Caco-2 (cell line): ENCODE measurements at regions of chr7 and their contacts with region 1.

Region 1: DNA sequence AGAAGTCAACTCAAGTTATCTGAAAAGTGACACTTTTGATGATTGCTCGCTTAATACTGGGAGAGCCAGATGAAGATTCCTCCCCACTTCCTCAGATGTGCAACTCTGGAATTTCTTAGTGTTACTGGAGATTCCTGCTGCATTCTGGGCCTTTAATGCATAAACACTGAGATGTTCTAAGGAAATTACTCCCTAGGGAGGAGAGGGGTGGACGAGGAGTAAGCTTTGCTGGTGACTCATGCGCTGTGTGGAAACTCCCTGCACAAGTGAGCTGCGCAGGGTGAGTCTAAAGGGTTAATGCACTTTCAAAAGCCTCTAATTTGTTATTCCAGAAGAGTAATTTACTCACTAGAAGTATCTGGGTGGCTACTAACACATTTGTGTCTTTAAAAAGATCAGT is 46.3 kb downstream of the EGFR start:
- DNase-seq: peak in 1 of 2 experiments; percentile 47
- H3K4me3 ChIP-seq: no peak overlapping the region
- H3K4me3 Mint-ChIP-seq: no peak overlapping the region
- H3K27ac Mint-ChIP-seq: peak overlapping the region; percentile 95
- H3K4me1 ChIP-seq: peaks cover 66% of the 10 kb centered on the region
- H3K4me1 Mint-ChIP-seq: peaks cover 46% of the 10 kb centered on the region
- H3K27me3 ChIP-seq: no peaks in the 10 kb centered on the region
- H3K27me3 Mint-ChIP-seq: no peaks in the 10 kb centered on the region
- CTCF ChIP-seq: no peak

Region 2: DNA sequence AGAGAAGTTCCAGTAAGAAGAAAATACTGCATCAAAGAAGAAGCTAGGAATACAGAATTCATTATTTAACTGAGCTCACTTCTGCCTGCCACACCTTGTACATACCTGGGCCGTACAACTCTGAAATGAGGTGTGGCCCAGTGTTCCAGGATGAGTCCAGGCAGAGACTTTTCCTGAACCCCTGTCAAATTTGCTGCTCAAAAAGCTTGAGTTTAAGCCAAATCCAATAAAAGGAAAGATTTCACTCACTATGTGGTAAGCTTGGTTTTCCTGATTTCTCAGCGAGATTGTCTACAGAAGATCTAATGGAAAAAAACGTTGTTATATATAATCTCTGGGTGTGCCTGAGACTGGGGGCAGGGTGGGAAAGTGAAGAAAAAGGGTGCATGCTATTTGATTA is 118.3 kb before region 1 on chr7:
- CTCF ChIA-PET with region 1: no interaction called
- POLR2A ChIA-PET with region 1: interaction called, 4 read pairs
- intact Hi-C with region 1: loop called (anchors 5 kb)
- DNase-seq: no peak
- H3K4me3 ChIP-seq: no peak overlapping the region
- H3K4me3 Mint-ChIP-seq: no peak overlapping the region
- H3K27ac Mint-ChIP-seq: peak overlapping the region; percentile 14
- H3K4me1 ChIP-seq: peaks cover 11% of the 10 kb centered on the region
- H3K4me1 Mint-ChIP-seq: peaks cover 6% of the 10 kb centered on the region
- H3K27me3 ChIP-seq: no peaks in the 10 kb centered on the region
- H3K27me3 Mint-ChIP-seq: no peaks in the 10 kb centered on the region
- CTCF ChIP-seq: no peak

Region 3: DNA sequence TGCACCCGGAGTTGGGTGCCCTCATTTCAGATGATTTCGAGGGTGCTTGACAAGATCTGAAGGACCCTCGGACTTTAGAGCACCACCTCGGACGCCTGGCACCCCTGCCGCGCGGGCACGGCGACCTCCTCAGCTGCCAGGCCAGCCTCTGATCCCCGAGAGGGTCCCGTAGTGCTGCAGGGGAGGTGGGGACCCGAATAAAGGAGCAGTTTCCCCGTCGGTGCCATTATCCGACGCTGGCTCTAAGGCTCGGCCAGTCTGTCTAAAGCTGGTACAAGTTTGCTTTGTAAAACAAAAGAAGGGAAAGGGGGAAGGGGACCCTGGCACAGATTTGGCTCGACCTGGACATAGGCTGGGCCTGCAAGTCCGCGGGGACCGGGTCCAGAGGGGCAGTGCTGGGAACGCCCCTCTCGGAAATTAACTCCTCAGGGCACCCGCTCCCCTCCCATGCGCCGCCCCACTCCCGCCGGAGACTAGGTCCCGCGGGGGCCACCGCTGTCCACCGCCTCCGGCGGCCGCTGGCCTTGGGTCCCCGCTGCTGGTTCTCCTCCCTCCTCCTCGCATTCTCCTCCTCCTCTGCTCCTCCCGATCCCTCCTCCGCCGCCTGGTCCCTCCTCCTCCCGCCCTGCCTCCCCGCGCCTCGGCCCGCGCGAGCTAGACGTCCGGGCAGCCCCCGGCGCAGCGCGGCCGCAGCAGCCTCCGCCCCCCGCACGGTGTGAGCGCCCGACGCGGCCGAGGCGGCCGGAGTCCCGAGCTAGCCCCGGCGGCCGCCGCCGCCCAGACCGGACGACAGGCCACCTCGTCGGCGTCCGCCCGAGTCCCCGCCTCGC is 46.5 kb before region 1 on chr7 and contains the start of gene EGFR:
- CTCF ChIA-PET with region 1: interaction called, 4 read pairs
- POLR2A ChIA-PET with region 1: interaction called, 7 read pairs
- intact Hi-C with region 1: loop called (anchors 1 kb)
- DNase-seq: peak; percentile 79 to 83
- H3K4me3 ChIP-seq: peak within 1 kb of the TSS; percentile 86
- H3K4me3 Mint-ChIP-seq: peak within 1 kb of the TSS; percentile 81
- H3K27ac Mint-ChIP-seq: peak within 1 kb of the TSS; percentile 59
- H3K4me1 ChIP-seq: peaks cover 32% of the 10 kb centered on the region
- H3K4me1 Mint-ChIP-seq: peaks cover 16% of the 10 kb centered on the region
- H3K27me3 ChIP-seq: no peaks in the 10 kb centered on the region
- H3K27me3 Mint-ChIP-seq: no peaks in the 10 kb centered on the region
- CTCF ChIP-seq: no peak
- total RNA-seq, gene EGFR: 55.1 and 60.1 TPM in 2 replicates

Region 4: GRCh38 chr7:55046582-55047365 is 18.3 kb before region 1 on chr7:
- CTCF ChIA-PET with region 1: interaction called, 3 read pairs
- POLR2A ChIA-PET with region 1: interaction called, 4 read pairs
- intact Hi-C with region 1: loop called (anchors 1 kb)
- DNase-seq: peak; percentile 50 to 76
- H3K4me3 ChIP-seq: no peak overlapping the region
- H3K4me3 Mint-ChIP-seq: no peak overlapping the region
- H3K27ac Mint-ChIP-seq: peak overlapping the region; percentile 82
- H3K4me1 ChIP-seq: peaks cover 37% of the 10 kb centered on the region
- H3K4me1 Mint-ChIP-seq: peaks cover 4% of the 10 kb centered on the region
- H3K27me3 ChIP-seq: no peaks in the 10 kb centered on the region
- H3K27me3 Mint-ChIP-seq: no peaks in the 10 kb centered on the region
- CTCF ChIP-seq: no peak

Region 5: GRCh38 chr7:55120481-55121198 is 55.6 kb after region 1 on chr7:
- CTCF ChIA-PET with region 1: no interaction called
- POLR2A ChIA-PET with region 1: no interaction called
- intact Hi-C with region 1: loop called (anchors 2 kb)
- DNase-seq: peak; percentile 52 to 55
- H3K4me3 ChIP-seq: no peak overlapping the region
- H3K4me3 Mint-ChIP-seq: no peak overlapping the region
- H3K27ac Mint-ChIP-seq: peak overlapping the region; percentile 60
- H3K4me1 ChIP-seq: peaks cover 22% of the 10 kb centered on the region
- H3K4me1 Mint-ChIP-seq: peaks cover 13% of the 10 kb centered on the region
- H3K27me3 ChIP-seq: no peaks in the 10 kb centered on the region
- H3K27me3 Mint-ChIP-seq: no peaks in the 10 kb centered on the region
- CTCF ChIP-seq: no peak

Region 6: DNA sequence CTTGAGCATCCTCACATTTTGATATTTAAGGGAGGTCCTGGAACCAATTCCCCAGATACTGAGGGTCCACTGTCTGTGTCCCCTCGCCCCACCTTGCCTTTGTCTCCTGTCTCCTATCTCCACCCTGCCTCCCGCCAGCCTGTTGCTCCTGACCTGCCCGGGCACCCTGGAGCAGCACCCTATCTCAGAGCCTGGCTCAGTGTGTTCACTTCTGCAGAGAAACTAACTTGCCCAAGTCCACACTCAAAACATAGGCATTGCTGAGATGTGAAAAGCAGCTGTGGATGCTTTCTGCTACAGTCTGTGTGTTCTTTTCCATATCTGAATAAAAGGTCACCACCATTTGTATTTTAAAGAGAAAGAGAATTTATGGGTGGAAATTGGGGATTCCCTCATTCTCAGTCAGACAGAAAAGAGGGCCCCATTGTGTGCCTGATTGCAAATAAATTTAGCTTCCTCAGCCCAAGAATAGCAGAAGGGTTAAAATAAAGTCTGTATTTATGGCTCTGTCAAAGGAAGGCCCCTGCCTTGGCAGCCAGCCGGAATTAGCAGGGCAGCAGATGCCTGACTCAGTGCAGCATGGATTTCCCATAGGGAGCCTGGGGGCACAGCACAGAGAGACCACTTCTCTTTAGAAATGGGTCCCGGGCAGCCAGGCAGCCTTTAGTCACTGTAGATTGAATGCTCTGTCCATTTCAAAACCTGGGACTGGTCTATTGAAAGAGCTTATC is 115.0 kb after region 1 on chr7:
- CTCF ChIA-PET with region 1: interaction called, 4 read pairs
- POLR2A ChIA-PET with region 1: no interaction called
- intact Hi-C with region 1: loop called (anchors 2 kb)
- DNase-seq: peak in 1 of 2 experiments; percentile 9
- H3K4me3 ChIP-seq: no peak overlapping the region
- H3K4me3 Mint-ChIP-seq: peak overlapping the region; percentile 68
- H3K27ac Mint-ChIP-seq: peak overlapping the region; percentile 92
- H3K4me1 ChIP-seq: peaks cover 70% of the 10 kb centered on the region
- H3K4me1 Mint-ChIP-seq: peaks cover 44% of the 10 kb centered on the region
- H3K27me3 ChIP-seq: no peaks in the 10 kb centered on the region
- H3K27me3 Mint-ChIP-seq: no peaks in the 10 kb centered on the region
- CTCF ChIP-seq: no peak